Colonic mucosa (tissue), 4 donors: ENCODE measurements at regions of chr17 and their contacts with region 1.

Region 1: GRCh38 chr17:76523084-76524037 is 14.1 kb downstream of the CYGB start:
- DNase-seq: peak; percentile 79
- H3K4me3 ChIP-seq: no peak overlapping the region
- H3K27ac ChIP-seq: no peak overlapping the region
- H3K4me1 ChIP-seq: peaks cover 14% of the 10 kb centered on the region
- H3K27me3 ChIP-seq: no peaks in the 10 kb centered on the region
- CTCF ChIP-seq: peak; percentile 99

Region 2: DNA sequence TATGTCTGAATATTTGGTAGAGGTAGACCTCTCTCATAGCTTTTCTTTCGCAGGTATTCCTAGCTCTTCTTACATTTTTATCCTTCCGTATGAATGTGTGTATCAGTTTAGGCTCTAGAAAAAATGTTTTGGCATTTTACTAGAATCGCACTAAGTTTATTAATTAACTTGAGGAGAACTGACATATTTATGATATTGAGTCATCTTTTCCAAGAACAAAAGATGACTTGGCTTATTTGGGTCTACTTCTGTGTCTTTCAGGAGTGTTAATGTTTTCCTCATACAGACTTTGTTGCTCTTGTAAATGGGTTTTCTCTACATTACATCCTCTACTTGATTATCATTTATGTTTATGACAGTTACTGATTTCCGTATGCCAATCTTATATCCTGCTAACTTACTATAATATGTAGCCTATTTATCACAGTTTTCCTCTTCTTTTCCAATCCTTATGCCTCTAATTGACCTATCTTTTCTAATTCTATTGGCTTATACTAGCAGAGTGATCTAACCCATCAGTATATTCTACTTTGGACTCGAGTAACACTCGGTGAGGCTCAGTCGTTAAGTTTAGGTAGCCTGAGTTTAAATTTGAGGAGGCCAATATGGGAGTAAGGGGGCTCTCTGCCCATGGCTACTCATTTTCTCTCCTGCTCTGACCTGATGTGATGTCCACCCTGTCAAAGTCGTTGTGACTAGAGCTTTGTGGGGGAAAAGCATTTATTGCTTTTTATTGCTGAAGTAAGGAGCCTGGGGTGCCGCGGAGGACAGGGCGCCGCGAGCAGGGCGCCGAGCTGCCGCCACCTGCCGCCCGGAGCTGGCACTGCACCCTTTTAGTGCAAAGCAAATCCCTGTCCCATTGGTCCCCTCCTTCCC is 100.1 kb after region 1 on chr17:
- intact Hi-C with region 1: loop called (anchors 5 kb)
- DNase-seq: peak; percentile 82
- H3K4me3 ChIP-seq: no peak overlapping the region
- H3K27ac ChIP-seq: no peak overlapping the region
- H3K4me1 ChIP-seq: no peaks in the 10 kb centered on the region
- H3K27me3 ChIP-seq: no peaks in the 10 kb centered on the region
- CTCF ChIP-seq: peak; percentile 97